ENCODE measurements at regions of chr5 and their contacts with region 1.

Region 1: DNA sequence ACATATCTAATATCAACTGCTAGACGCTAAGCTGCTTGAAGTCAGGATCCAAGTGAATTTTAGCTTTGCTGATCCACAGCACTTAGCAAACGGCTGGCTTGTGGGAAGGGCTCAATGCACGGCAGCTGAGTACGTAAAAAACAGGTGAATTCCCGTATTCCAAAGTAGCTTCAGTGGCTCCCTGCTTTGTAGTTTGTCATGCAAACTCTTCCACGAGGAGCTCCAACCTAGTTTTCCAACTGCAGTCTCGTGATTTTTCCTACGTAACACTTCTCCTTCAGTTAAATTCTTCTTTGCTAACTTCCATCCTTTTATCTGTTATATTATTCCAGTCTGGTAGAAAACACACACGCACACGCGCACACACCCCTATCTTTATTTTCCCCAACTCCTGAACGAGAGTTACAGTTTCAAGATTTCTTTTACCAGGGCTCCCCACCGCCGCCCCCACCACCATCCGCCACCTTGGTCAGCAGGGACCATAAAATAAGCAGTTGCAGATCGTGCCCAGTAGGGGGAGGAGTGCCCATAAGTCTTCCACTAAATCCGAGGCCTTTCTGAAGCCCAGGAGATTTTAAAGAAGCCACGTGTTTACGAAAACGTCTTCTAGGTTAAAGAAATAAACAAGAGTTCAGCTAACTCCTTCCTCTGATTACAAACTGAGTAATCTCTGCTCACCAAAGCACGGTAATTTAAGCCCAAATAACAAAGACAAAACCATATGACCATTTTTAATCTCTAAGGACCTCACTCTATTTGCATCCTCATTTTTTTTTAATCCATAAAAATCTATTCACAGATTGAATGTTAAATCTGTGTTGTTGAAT is 34.8 kb upstream of the TRIO start:
- DNase-seq: peak; percentile 54
- ATAC-seq: peak; percentile 85
- H3K4me3 ChIP-seq: peak overlapping the region; percentile 41 to 56 (median 55)
- H3K27ac ChIP-seq: no peak overlapping the region
- H3K4me1 ChIP-seq: peaks cover 15% of the 10 kb centered on the region
- H3K27me3 ChIP-seq: no peaks in the 10 kb centered on the region; a peak in 1 of 5 replicates
- CTCF ChIP-seq: peak; percentile 75
- EP300 ChIP-seq: no peak
- POLR2A ChIP-seq: no peak
- RAD21 ChIP-seq: peak; percentile 47; the same call in 1 of the 2 replicates

Region 2: DNA sequence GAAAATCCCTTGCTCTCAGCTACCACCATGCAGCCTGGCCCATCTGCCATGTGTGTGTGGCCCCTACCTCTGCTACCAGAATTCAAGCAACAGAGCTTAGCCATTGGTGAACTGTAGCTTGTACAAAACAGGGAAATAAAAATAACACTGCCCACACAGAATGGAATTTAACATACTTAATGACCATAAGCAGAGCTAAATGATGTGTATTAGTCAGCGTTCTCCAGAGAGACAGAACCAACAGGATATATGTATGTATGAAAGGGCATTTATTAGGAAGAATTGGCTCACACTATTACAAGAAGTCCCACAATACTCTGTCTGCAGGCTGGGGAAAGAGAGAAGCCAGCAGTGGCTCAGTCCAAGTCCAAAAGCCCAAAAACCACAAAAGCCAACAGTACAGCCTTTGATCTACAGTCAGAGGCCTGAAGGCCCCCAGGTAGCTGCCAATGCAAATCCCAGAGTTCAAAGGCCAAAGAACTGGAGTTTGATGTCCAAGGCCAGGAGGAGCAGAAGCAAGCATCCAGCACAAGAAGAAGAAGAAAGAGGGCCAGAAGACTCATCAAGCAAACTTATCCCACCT is 482.7 kb before region 1 on chr5:
- CTCF ChIA-PET with region 1: no interaction called
- POLR2A ChIA-PET with region 1: no interaction called
- in situ Hi-C with region 1: no loop called
- intact Hi-C with region 1: no loop called
- DNase-seq: no peak
- ATAC-seq: no peak
- H3K4me3 ChIP-seq: no peak overlapping the region
- H3K27ac ChIP-seq: no peak overlapping the region
- H3K4me1 ChIP-seq: no peaks in the 10 kb centered on the region
- H3K27me3 ChIP-seq: no peaks in the 10 kb centered on the region
- CTCF ChIP-seq: no peak
- EP300 ChIP-seq: no peak
- POLR2A ChIP-seq: no peak
- RAD21 ChIP-seq: no peak

Region 3: GRCh38 chr5:13987843-13988464 is 120.4 kb before region 1 on chr5:
- CTCF ChIA-PET with region 1: interaction called, 5 read pairs
- POLR2A ChIA-PET with region 1: no interaction called
- in situ Hi-C with region 1: loop called (anchors 10 kb)
- intact Hi-C with region 1: loop called (anchors 2 kb)
- DNase-seq: peak; percentile 37
- ATAC-seq: peak; percentile 61; the same call in 2 of the 3 replicates
- H3K4me3 ChIP-seq: no peak overlapping the region
- H3K27ac ChIP-seq: no peak overlapping the region
- H3K4me1 ChIP-seq: no peaks in the 10 kb centered on the region
- H3K27me3 ChIP-seq: peaks cover 0 to 4% of the 10 kb centered on the region in 2 experiments; a peak in 1 of 5 replicates
- CTCF ChIP-seq: peak; percentile 76
- EP300 ChIP-seq: no peak
- POLR2A ChIP-seq: no peak
- RAD21 ChIP-seq: peak; percentile 72

Region 4: DNA sequence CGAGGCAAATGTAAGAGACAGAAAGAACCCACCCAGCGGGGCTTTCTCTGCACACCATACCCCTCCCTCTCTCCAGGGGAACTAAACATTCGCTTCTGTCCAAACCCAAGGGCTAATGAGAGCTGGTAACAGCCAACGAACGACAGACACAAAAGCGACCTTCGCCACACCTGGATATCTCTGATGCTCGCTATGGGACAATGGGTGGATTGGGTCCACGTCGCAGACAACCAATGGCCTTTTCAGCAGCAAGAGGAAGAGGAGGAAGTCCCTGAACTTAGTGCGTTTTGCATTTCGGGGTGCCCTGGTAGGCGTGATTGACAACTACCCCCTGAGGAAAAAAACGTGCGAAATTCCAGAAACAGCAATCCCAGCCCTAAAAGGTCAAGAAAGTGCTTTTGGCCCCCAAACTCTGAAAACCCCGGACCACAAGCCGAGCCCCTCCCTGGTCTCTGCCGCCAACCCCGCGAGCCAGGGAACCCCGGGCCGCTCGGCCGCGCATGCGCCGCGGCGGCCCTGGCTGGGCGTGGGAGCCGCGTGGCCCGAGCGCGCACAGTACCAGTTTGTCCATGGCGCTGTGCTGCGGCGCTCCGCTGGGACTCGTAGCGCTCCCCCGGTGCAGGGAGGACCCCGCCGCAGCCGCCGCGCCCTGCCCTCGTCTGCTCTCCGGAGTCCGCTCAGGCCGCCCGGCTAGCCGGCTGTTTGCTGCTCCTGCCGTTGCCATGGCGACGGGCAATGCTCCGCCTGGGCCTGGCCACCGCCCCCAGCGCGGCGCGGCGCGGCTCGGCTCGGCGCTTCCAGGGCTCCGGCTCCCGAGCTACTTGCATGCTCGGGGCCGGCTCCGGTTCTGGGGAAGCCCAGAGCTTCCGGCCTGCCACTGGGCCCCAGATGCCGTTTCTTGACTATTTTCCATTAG is 97.0 kb before region 1 on chr5:
- CTCF ChIA-PET with region 1: no interaction called
- POLR2A ChIA-PET with region 1: no interaction called
- in situ Hi-C with region 1: no loop called
- intact Hi-C with region 1: loop called (anchors 10 kb)
- DNase-seq: peak; percentile 78
- ATAC-seq: peak; percentile 98
- H3K4me3 ChIP-seq: peak overlapping the region; percentile 34 to 65 (median 37)
- H3K27ac ChIP-seq: no peak overlapping the region
- H3K4me1 ChIP-seq: peaks cover 33% of the 10 kb centered on the region
- H3K27me3 ChIP-seq: peaks cover 0 to 8% of the 10 kb centered on the region in 2 experiments; a peak in 3 of 5 replicates
- CTCF ChIP-seq: peak; percentile 44
- EP300 ChIP-seq: no peak
- POLR2A ChIP-seq: no peak
- RAD21 ChIP-seq: peak; percentile 59; the same call in 1 of the 2 replicates

Region 5: GRCh38 chr5:14142827-14143548 is 34.6 kb after region 1 on chr5 and contains the start of gene TRIO:
- CTCF ChIA-PET with region 1: no interaction called
- POLR2A ChIA-PET with region 1: no interaction called
- in situ Hi-C with region 1: no loop called
- intact Hi-C with region 1: loop called (anchors 2 kb)
- DNase-seq: peak; percentile 81
- ATAC-seq: peak; percentile 73
- H3K4me3 ChIP-seq: peak within 1 kb of the TSS; percentile 85 to 99 (median 93)
- H3K27ac ChIP-seq: peak within 1 kb of the TSS; percentile 70
- H3K4me1 ChIP-seq: peaks cover 28% of the 10 kb centered on the region
- H3K27me3 ChIP-seq: no peaks in the 10 kb centered on the region; a peak in 2 of 5 replicates
- CTCF ChIP-seq: peak; percentile 67
- EP300 ChIP-seq: no peak
- POLR2A ChIP-seq: peak in 1 of 2 experiments; percentile 78; a peak in 2 of 4 replicates
- RAD21 ChIP-seq: peak; percentile 77
- total RNA-seq, gene TRIO: 40.1 and 45.2 TPM in 2 replicates

Region 6: GRCh38 chr5:14223372-14223771 is 115.0 kb after region 1 on chr5:
- CTCF ChIA-PET with region 1: no interaction called
- POLR2A ChIA-PET with region 1: no interaction called
- in situ Hi-C with region 1: no loop called
- intact Hi-C with region 1: no loop called
- DNase-seq: no peak
- ATAC-seq: no peak
- H3K4me3 ChIP-seq: no peak overlapping the region
- H3K27ac ChIP-seq: no peak overlapping the region
- H3K4me1 ChIP-seq: peaks cover 35% of the 10 kb centered on the region
- H3K27me3 ChIP-seq: no peaks in the 10 kb centered on the region
- CTCF ChIP-seq: no peak
- EP300 ChIP-seq: no peak
- POLR2A ChIP-seq: no peak
- RAD21 ChIP-seq: no peak

Region 7: DNA sequence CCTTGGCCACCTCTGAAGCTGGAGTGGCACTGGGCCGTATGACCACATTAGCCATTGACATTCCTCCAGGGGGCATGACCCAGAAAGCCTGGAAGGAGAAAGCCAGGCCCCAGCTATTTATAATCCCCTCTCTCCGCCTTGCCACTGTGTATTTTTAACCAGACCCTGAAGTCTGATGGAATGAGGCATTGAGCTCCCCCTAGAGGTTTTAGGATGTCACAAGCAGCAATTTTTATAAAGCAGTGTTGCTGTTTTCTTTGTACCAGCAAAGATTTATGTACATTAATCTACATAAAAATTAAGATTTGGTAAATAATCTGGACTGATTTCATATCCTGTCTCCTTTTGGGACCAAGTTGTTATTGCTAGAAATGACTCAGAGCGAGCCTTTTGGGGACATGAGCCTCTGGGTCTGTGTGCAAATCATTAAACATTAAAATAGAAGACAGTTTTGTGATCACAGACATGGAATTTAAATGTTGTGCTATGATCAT is 161.9 kb after region 1 on chr5:
- CTCF ChIA-PET with region 1: interaction called, 16 read pairs
- POLR2A ChIA-PET with region 1: interaction called, 3 read pairs
- in situ Hi-C with region 1: loop called (anchors 5 kb)
- intact Hi-C with region 1: loop called (anchors 1 kb)
- DNase-seq: peak; percentile 72
- ATAC-seq: peak; percentile 83
- H3K4me3 ChIP-seq: no peak overlapping the region
- H3K27ac ChIP-seq: no peak overlapping the region
- H3K4me1 ChIP-seq: peaks cover 61% of the 10 kb centered on the region
- H3K27me3 ChIP-seq: no peaks in the 10 kb centered on the region
- CTCF ChIP-seq: peak; percentile 76
- EP300 ChIP-seq: no peak
- POLR2A ChIP-seq: no peak
- RAD21 ChIP-seq: peak; percentile 55; the same call in 1 of the 2 replicates

Region 8: DNA sequence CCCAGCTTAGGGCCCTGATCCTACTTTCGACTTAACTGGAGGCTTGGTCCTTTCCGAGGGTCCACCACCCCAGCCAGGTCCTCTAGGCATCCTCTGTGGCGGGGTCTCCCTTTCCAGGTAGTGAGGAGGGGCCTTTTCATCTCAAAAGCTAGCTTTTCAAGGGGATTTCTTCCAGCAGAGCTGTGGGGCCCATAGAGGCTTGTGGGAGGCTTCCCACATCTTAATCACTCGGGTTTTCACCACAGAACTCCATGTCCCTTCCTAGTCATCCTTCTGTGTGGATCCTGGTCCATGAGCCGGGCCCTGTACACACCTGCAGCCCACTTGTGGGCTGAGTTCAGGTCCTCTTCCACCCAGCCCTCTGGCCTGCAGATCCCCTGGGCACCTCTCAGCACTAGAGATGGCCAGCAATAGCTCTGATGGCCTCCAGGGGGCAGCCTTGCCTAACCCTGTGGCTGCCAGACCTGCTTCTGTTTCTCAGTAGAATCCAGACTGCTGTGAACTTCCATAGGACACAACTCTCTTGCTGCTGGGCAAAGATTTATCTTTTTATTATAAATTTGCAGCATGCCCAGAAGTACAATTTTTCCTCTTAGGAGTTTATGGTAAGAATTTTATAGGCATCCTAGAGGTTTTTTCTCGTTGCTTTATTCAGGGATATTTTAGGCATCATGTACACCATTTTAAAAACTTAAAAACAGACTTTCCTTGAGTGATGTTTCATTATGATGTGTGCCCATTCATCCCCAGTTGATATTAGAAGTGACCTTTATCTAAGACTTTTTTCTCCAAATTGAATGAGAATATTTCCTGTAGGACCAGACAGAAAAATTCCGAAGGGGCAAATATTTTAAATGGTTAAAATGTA is 243.7 kb after region 1 on chr5:
- CTCF ChIA-PET with region 1: no interaction called
- POLR2A ChIA-PET with region 1: no interaction called
- in situ Hi-C with region 1: no loop called
- intact Hi-C with region 1: loop called (anchors 5 kb)
- DNase-seq: peak; percentile 35
- ATAC-seq: peak; percentile 98
- H3K4me3 ChIP-seq: no peak overlapping the region
- H3K27ac ChIP-seq: no peak overlapping the region
- H3K4me1 ChIP-seq: no peaks in the 10 kb centered on the region
- H3K27me3 ChIP-seq: no peaks in the 10 kb centered on the region
- CTCF ChIP-seq: peak; percentile 87
- EP300 ChIP-seq: no peak
- POLR2A ChIP-seq: no peak
- RAD21 ChIP-seq: peak; percentile 45

Region 9: GRCh38 chr5:14399054-14399692 is 290.8 kb after region 1 on chr5:
- CTCF ChIA-PET with region 1: no interaction called
- POLR2A ChIA-PET with region 1: no interaction called
- in situ Hi-C with region 1: no loop called
- intact Hi-C with region 1: no loop called
- DNase-seq: peak; percentile 28
- ATAC-seq: peak; percentile 63; the same call in 2 of the 3 replicates
- H3K4me3 ChIP-seq: no peak overlapping the region
- H3K27ac ChIP-seq: no peak overlapping the region
- H3K4me1 ChIP-seq: no peaks in the 10 kb centered on the region
- H3K27me3 ChIP-seq: no peaks in the 10 kb centered on the region
- CTCF ChIP-seq: peak; percentile 54
- EP300 ChIP-seq: no peak
- POLR2A ChIP-seq: no peak
- RAD21 ChIP-seq: no peak

Measured in HepG2 (cell line).